Naive thymus-derived CD4-positive, alpha-beta T cell (primary cell): ENCODE measurements at regions of chr17 and their contacts with region 1.

Region 1: DNA sequence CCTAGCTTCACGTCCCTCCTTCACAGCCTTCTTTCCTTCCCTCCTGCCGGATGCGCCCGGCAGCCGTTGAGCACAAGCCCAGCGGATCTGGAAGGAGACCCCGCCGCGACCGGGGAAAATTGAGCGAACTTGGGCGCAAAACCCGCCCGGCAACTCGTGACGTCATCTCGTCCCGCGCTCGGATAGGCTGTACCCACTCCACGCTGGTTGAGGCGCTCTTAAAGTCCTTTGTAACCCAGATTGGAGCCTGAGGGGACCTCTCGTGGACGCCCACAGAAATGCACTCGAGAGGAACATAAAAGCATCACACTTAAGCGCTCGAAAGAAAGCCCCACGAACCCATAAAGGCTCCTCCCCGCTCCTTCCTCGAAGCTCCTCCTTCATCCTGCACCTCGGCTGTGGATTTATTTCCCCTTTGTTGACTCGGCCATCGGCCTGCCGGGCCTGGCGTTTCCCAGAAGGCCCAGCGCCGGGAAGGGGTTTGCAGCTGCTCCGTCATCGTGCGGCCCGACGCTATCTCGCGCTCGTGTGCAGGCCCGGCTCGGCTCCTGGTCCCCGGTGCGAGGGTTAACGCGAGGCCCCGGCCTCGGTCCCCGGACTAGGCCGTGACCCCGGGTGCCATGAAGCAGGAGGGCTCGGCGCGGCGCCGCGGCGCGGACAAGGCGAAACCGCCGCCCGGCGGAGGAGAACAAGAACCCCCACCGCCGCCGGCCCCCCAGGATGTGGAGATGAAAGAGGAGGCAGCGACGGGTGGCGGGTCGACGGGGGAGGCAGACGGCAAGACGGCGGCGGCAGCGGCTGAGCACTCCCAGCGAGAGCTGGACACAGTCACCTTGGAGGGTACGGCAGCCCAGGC is at the start of gene PSMD3:
- DNase-seq: peak; percentile 86 to 99 (median 98)
- ATAC-seq: peak; percentile 97
- H3K4me3 ChIP-seq: peak within 1 kb of the TSS; percentile 63
- H3K4me3 Mint-ChIP-seq: peak within 1 kb of the TSS; percentile 89 to 97 (median 94)
- H3K27ac ChIP-seq: peak within 1 kb of the TSS; percentile 91
- H3K27ac Mint-ChIP-seq: peak within 1 kb of the TSS; percentile 89 to 96 (median 93)
- H3K4me1 ChIP-seq: peaks cover 17 to 23% of the 10 kb centered on the region in 2 donors
- H3K4me1 Mint-ChIP-seq: peaks cover 24 to 50% (median 46%) of the 10 kb centered on the region in 7 donors
- H3K27me3 ChIP-seq: no peaks in the 10 kb centered on the region
- H3K27me3 Mint-ChIP-seq: peaks cover 0 to 13% (median 0%) of the 10 kb centered on the region in 5 donors
- total RNA-seq, gene PSMD3: 55.7 to 111 (median 68.9) TPM

Region 2: DNA sequence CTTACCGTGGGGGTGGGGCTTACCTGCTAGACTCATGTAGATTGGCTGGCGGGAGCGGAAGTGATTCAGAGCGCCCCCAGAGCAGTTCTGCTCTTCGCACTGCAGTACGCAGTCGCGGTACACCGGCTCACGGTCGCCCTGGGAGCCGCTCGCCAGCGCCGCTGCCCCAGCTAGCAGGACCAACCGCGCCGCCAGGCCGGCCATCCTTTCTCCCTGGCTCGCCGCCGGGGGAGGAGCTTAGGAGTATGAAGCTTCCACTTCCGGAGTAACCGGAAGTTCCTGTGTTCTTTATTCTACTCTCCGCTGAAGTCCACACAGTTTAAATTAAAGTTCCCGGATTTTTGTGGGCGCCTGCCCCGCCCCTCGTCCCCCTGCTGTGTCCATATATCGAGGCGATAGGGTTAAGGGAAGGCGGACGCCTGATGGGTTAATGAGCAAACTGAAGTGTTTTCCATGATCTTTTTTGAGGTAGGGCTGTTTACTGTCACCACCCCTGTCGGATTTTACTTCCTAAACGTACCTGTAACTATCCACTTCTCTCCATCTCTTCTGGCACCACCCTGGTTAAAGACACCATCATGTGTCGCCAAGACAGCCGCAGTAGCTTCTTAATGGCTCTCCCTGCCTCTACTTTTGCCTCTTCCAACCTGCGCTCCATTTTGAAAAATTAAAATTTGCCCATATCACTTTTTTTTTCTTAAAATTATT is 292.6 kb before region 1 on chr17 and contains the start of gene PGAP3:
- CTCF ChIA-PET with region 1: no interaction called
- POLR2A ChIA-PET with region 1: interaction called, 3 read pairs
- intact Hi-C with region 1: loop called in 1 of 2 experiments (anchors 5 kb)
- DNase-seq: peak; percentile 71 to 86 (median 83)
- ATAC-seq: peak; percentile 95
- H3K4me3 ChIP-seq: peak within 1 kb of the TSS; percentile 93
- H3K4me3 Mint-ChIP-seq: peak within 1 kb of the TSS; percentile 87 to 99 (median 98)
- H3K27ac ChIP-seq: peak within 1 kb of the TSS; percentile 77
- H3K27ac Mint-ChIP-seq: peak within 1 kb of the TSS; percentile 93 to 99 (median 98)
- H3K4me1 ChIP-seq: peaks cover 8 to 18% of the 10 kb centered on the region in 2 donors
- H3K4me1 Mint-ChIP-seq: peaks cover 19 to 32% (median 30%) of the 10 kb centered on the region in 7 donors
- H3K27me3 ChIP-seq: no peaks in the 10 kb centered on the region
- H3K27me3 Mint-ChIP-seq: no peaks in the 10 kb centered on the region
- total RNA-seq, gene PGAP3: 26.3 to 39.9 (median 35.1) TPM

Region 3: DNA sequence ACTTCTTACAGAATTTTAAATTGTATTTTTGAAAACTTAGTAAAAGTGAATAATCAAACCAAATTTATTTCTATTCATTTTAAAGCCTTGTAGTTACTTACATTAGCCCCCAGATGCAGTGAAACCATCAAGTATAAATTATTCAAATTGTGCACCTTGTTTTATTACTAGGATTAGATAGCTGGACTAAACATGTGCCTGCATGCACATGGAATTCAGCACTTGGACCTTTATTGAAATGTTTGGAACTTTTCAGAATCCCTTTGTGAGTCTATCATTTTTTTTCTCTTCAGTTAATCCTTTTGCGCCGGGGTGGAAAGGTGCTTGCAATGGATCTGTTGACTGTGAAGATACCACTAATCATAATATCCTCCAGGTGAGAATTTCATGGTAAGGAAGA is 107.8 kb before region 1 on chr17:
- CTCF ChIA-PET with region 1: interaction called, 24 read pairs
- POLR2A ChIA-PET with region 1: interaction called, 13 read pairs
- intact Hi-C with region 1: loop called in 1 of 2 experiments (anchors 1 kb)
- DNase-seq: peak in 1 of 9 donors; percentile 25
- ATAC-seq: peak; percentile 57
- H3K4me3 ChIP-seq: no peak overlapping the region
- H3K4me3 Mint-ChIP-seq: no peak overlapping the region
- H3K27ac ChIP-seq: no peak overlapping the region
- H3K27ac Mint-ChIP-seq: no peak overlapping the region
- H3K4me1 ChIP-seq: no peaks in the 10 kb centered on the region
- H3K4me1 Mint-ChIP-seq: peaks cover 2 to 13% (median 11%) of the 10 kb centered on the region in 7 donors
- H3K27me3 ChIP-seq: no peaks in the 10 kb centered on the region
- H3K27me3 Mint-ChIP-seq: peaks cover 0 to 22% (median 0%) of the 10 kb centered on the region in 5 donors

Region 4: DNA sequence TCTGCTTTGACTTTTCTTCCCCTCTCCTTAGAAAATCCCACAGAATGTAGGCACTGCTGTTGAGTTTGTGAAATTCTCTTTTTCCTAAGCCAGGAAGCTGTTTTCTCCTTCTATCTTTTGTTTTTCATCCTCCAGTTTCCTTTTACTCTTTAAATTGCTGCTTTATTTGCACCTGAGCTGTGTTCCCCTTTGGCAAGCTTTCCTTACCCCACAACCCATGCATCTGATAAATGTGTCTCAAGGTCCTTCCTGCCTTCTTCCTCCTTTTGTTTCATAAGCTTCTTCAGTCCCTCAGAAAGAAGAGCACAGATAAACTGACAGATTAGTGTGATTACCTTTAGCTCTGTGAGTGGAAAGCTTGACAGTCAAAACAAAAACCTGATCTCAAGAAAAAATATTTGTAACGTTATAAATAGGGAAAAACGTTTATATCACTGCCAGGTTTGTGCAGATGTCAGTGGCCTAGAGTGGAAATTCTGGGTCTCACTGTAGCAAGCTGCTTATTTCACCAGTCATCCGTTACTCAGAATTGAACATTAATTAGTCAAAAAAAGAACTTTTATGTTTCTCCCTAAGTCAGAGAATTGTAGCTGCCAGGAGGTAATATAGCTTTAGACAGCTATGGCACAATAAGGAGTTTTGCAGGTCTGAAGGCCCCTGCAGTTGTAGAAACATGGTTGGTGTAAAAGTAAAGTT is 85.8 kb before region 1 on chr17:
- CTCF ChIA-PET with region 1: no interaction called
- POLR2A ChIA-PET with region 1: no interaction called
- intact Hi-C with region 1: no loop called
- DNase-seq: no peak
- ATAC-seq: no peak
- H3K4me3 ChIP-seq: no peak overlapping the region
- H3K4me3 Mint-ChIP-seq: no peak overlapping the region
- H3K27ac ChIP-seq: no peak overlapping the region
- H3K27ac Mint-ChIP-seq: peak overlapping the region in 5 of 9 donors; percentile 10 to 52 (median 12)
- H3K4me1 ChIP-seq: no peaks in the 10 kb centered on the region
- H3K4me1 Mint-ChIP-seq: peaks cover 4 to 11% (median 10%) of the 10 kb centered on the region in 7 donors
- H3K27me3 ChIP-seq: no peaks in the 10 kb centered on the region
- H3K27me3 Mint-ChIP-seq: peaks cover 0 to 10% (median 0%) of the 10 kb centered on the region in 5 donors

Region 5: GRCh38 chr17:39963829-39964228 is 16.8 kb before region 1 on chr17:
- CTCF ChIA-PET with region 1: interaction called, 41 read pairs
- POLR2A ChIA-PET with region 1: interaction called, 10 read pairs
- intact Hi-C with region 1: loop called (anchors 1 kb)
- DNase-seq: peak in 4 of 9 donors; percentile 23 to 40 (median 28)
- ATAC-seq: no peak
- H3K4me3 ChIP-seq: no peak overlapping the region
- H3K4me3 Mint-ChIP-seq: peak overlapping the region in 9 of 10 donors; percentile 2 to 66 (median 39)
- H3K27ac ChIP-seq: no peak overlapping the region
- H3K27ac Mint-ChIP-seq: peak overlapping the region in 8 of 9 donors; percentile 40 to 96 (median 69)
- H3K4me1 ChIP-seq: peaks cover 13 to 28% of the 10 kb centered on the region in 2 donors
- H3K4me1 Mint-ChIP-seq: peaks cover 16 to 51% (median 35%) of the 10 kb centered on the region in 7 donors
- H3K27me3 ChIP-seq: no peaks in the 10 kb centered on the region
- H3K27me3 Mint-ChIP-seq: peaks cover 0 to 16% (median 0%) of the 10 kb centered on the region in 5 donors

Region 6: GRCh38 chr17:40219073-40219860 is 238.7 kb after region 1 on chr17 and contains the start of gene WIPF2:
- CTCF ChIA-PET with region 1: no interaction called
- POLR2A ChIA-PET with region 1: interaction called, 6 read pairs
- intact Hi-C with region 1: loop called in 1 of 2 experiments (anchors 1 kb)
- DNase-seq: peak; percentile 88 to 97 (median 95)
- ATAC-seq: peak; percentile 96
- H3K4me3 ChIP-seq: peak within 1 kb of the TSS; percentile 74
- H3K4me3 Mint-ChIP-seq: peak within 1 kb of the TSS; percentile 86 to 100 (median 96)
- H3K27ac ChIP-seq: peak within 1 kb of the TSS; percentile 92
- H3K27ac Mint-ChIP-seq: peak within 1 kb of the TSS; percentile 96 to 100 (median 100)
- H3K4me1 ChIP-seq: peaks cover 9 to 10% of the 10 kb centered on the region in 2 donors
- H3K4me1 Mint-ChIP-seq: peaks cover 25 to 44% (median 32%) of the 10 kb centered on the region in 7 donors
- H3K27me3 ChIP-seq: no peaks in the 10 kb centered on the region
- H3K27me3 Mint-ChIP-seq: no peaks in the 10 kb centered on the region
- total RNA-seq, gene WIPF2: 24.8 to 31.8 (median 28.6) TPM